ENCODE measurements at regions of chr11 and their contacts with region 1.

Region 1: GRCh38 chr11:68257475-68258362 is 14.1 kb downstream of the C11orf24 start:
- DNase-seq: peak; percentile 87

Region 2: DNA sequence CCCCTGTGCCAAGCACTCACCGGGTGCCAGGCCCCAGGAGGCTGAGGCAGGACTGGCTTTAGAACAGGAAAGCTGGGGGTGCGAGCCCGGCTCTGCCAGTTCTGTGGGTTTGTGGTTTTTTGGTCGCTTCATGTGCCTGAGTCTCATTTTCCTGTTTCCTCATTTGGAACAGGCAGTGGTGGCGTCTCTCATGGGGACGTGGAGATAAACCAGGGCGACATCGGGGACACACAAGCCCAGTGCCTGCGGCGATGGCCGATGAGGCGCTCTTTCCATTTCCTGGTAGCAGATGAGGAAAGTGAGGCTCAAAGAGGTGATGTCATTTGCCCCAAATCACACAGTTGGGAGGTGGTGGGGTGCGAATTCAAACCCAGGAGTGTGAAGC is 115.7 kb before region 1 on chr11:
- CTCF ChIA-PET with region 1: no interaction called
- POLR2A ChIA-PET with region 1: no interaction called
- DNase-seq: no peak

Region 3: GRCh38 chr11:68297812-68298658 is 40.3 kb after region 1 on chr11:
- CTCF ChIA-PET with region 1: interaction called, 47 read pairs
- POLR2A ChIA-PET with region 1: interaction called, 6 read pairs
- DNase-seq: peak; percentile 91